ENCODE measurements at regions of chr7 and their contacts with region 1.

Region 1: DNA sequence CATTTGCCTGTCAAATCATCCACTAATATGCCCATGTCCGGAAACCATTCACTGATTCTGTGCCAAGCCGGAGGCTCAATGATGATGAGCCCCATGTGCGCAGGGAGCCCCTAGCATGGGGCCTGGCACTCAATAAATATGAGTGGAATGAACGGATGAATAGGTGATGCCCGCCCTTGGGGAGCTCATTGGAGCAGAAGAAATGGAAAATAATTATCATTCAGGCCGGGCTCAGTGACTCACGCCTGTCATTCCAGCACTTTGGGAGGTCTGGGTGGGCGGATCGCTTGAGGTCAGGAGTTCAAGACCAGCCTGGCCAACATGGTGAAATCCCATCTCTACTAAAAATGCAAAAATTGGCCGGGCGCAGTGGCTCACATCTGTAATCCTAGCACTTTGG is 11.0 kb downstream of the RHBDD2 start:
- DNase-seq: no peak
- ATAC-seq: no peak
- H3K4me3 Mint-ChIP-seq: no peak overlapping the region
- H3K27ac Mint-ChIP-seq: no peak overlapping the region
- H3K4me1 Mint-ChIP-seq: peaks cover 4% of the 10 kb centered on the region
- H3K27me3 Mint-ChIP-seq: no peaks in the 10 kb centered on the region

Region 2: DNA sequence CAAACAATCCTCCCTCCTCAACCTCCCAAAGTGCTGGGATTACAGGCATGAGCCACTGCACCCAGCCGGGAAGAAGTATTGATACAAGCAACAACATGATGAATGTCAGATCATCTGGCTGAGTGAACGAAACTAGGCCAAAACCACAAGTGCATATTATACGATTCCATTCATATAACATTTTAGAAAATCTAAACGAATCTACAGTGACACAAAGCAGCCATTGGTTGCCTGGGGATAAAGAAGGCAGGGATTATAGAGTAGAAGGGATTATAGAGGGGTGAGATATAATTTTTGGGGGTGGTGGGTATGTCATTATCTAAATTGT is 22.5 kb before region 1 on chr7:
- CTCF ChIA-PET with region 1: no interaction called
- POLR2A ChIA-PET with region 1: no interaction called
- DNase-seq: no peak
- ATAC-seq: no peak
- H3K4me3 Mint-ChIP-seq: no peak overlapping the region
- H3K27ac Mint-ChIP-seq: no peak overlapping the region
- H3K4me1 Mint-ChIP-seq: peaks cover 6% of the 10 kb centered on the region
- H3K27me3 Mint-ChIP-seq: peaks cover 6% of the 10 kb centered on the region

Region 3: GRCh38 chr7:75878769-75879611 is 10.8 kb before region 1 on chr7 and contains the start of gene RHBDD2:
- CTCF ChIA-PET with region 1: no interaction called
- POLR2A ChIA-PET with region 1: interaction called, 12 read pairs
- DNase-seq: peak; percentile 97
- ATAC-seq: peak; percentile 92
- H3K4me3 Mint-ChIP-seq: peak within 1 kb of the TSS; percentile 95
- H3K27ac Mint-ChIP-seq: peak within 1 kb of the TSS; percentile 90
- H3K4me1 Mint-ChIP-seq: peaks cover 19% of the 10 kb centered on the region
- H3K27me3 Mint-ChIP-seq: no peaks in the 10 kb centered on the region
- total RNA-seq, gene RHBDD2: 18.1 to 18.4 TPM

Region 4: GRCh38 chr7:76031964-76032363 is 142.1 kb after region 1 on chr7:
- CTCF ChIA-PET with region 1: no interaction called
- POLR2A ChIA-PET with region 1: no interaction called
- DNase-seq: no peak
- ATAC-seq: no peak
- H3K4me3 Mint-ChIP-seq: no peak overlapping the region
- H3K27ac Mint-ChIP-seq: no peak overlapping the region
- H3K4me1 Mint-ChIP-seq: peaks cover 3% of the 10 kb centered on the region
- H3K27me3 Mint-ChIP-seq: no peaks in the 10 kb centered on the region

Measured in activated CD8-positive, alpha-beta T cell treated with anti-CD3 and anti-CD28 coated beads, Interleukin-2, amount 10 ng/mL, durations not matched to agents 7 days and 5 days (primary cell).